GM10248 (cell line): ENCODE measurements at regions of chr1 and their contacts with region 1.

Region 1: GRCh38 chr1:219385786-219386427 is 212.2 kb downstream of the LYPLAL1 start:
- DNase-seq: peak; percentile 50
- CTCF ChIP-seq: peak; percentile 73

Region 2: DNA sequence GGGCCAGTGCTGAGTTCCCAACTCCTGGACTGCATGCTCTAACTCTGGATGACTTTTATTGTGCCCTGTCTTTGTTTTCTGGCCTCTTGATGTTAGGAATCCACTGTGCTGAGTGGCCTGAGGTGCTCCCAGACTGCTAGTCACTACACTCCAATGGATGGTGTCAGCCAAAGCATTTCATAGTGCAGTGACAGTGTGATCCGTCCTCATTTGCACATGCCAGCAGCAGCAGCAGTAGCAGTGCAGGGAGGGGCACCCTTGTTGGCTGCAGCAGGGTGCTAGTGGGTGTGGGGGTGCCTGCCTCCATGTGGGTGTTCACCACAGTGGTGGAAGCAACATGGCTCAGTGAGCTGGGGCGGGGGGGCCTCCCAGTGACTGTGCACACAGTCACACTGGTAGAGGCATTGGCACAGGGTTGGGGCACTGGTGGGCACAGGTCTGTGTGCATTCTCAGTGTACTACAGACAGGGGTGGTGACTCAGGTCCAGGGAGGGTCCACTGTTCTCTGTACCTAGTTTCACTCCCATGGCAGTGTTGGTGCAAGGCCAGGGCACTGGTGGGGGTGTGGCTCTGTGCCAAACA is 13.0 kb after region 1 on chr1:
- CTCF ChIA-PET with region 1: interaction called, 12 read pairs
- POLR2A ChIA-PET with region 1: no interaction called
- DNase-seq: no peak
- CTCF ChIP-seq: no peak

Region 3: GRCh38 chr1:219495737-219496408 is 110.0 kb after region 1 on chr1:
- CTCF ChIA-PET with region 1: no interaction called
- POLR2A ChIA-PET with region 1: no interaction called
- DNase-seq: no peak
- CTCF ChIP-seq: no peak